ENCODE measurements at regions of chr15 and their contacts with region 1.

Region 1: DNA sequence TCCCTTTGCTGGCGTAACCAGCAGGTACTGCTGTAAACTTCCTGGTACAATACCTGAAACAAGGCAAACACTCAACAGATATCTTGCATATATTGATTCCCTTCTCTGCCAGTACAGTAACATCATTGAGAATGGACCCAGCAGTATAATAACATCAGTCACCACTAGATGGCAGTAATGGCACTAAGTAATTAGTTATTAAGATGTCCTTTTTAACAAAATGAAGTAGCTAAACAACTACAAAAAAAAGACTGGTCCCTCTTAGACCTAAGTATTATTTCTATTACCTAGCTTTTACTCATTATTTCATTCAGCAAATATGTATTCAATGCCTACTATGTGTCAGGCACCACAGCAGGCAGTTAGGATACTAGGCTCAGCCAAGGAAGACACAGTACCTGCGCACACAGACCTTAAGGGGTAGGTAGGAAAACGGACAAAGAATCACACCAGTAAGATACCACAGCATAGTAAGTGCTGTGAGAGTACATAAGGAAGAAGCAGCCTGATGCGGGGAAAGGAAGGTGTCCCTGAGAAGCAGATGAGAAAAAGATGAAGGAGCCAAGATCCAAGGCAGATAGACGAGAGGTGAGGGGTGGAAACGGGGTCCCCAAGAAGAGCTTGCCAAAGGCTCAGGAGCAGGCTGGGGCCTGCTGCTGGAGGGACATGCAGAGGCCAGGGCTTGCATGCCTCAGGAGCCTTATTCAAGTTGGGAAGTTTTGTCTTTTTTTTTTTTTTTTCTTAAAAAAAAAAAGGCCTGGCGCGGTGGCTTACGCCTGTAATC is 102.8 kb upstream of the CHD2 start:
- DNase-seq: no peak
- H3K4me3 ChIP-seq: no peak overlapping the region
- H3K27ac ChIP-seq: peak overlapping the region in 3 of 4 donors; percentile 28 to 52 (median 31)
- H3K4me1 ChIP-seq: peaks cover 4 to 25% (median 12%) of the 10 kb centered on the region in 4 donors
- H3K27me3 ChIP-seq: no peaks in the 10 kb centered on the region
- CTCF ChIP-seq: peak; percentile 75 to 85 (median 83)
- EP300 ChIP-seq: no peak
- POLR2A ChIP-seq: no peak

Region 2: GRCh38 chr15:91885714-91886270 is 911.6 kb before region 1 on chr15:
- in situ Hi-C with region 1: no loop called
- intact Hi-C with region 1: no loop called
- DNase-seq: no peak
- H3K4me3 ChIP-seq: no peak overlapping the region
- H3K27ac ChIP-seq: no peak overlapping the region
- H3K4me1 ChIP-seq: peaks cover 5 to 30% (median 21%) of the 10 kb centered on the region in 4 donors
- H3K27me3 ChIP-seq: no peaks in the 10 kb centered on the region
- CTCF ChIP-seq: peak in 2 of 5 experiments; percentile 20 to 23
- EP300 ChIP-seq: no peak
- POLR2A ChIP-seq: no peak

Region 3: DNA sequence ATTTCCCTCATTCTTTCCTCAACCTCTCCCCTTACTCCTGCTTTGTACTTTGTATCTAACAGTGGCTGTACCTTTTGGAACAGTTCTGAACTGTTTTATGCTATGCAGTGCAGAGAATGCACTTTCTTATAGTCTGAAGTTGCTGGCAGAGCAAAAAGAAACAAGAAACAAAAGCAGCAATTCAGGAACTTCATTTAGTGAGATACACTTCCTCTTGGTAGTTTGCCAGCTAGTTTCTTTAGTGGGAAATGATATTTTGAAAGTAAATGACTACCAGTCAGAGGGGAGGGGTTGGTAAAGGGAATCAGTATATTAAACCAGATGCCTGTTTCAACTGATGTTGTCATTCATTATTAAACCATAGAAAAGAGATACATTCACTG is 47.8 kb after region 1 on chr15:
- in situ Hi-C with region 1: no loop called
- intact Hi-C with region 1: no loop called
- DNase-seq: no peak
- H3K4me3 ChIP-seq: peak overlapping the region in 1 of 4 donors; percentile 20
- H3K27ac ChIP-seq: peak overlapping the region; percentile 73 to 92 (median 86)
- H3K4me1 ChIP-seq: peaks cover 0 to 34% (median 20%) of the 10 kb centered on the region in 4 donors
- H3K27me3 ChIP-seq: no peaks in the 10 kb centered on the region
- CTCF ChIP-seq: no peak
- EP300 ChIP-seq: no peak
- POLR2A ChIP-seq: peak; percentile 15

Region 4: DNA sequence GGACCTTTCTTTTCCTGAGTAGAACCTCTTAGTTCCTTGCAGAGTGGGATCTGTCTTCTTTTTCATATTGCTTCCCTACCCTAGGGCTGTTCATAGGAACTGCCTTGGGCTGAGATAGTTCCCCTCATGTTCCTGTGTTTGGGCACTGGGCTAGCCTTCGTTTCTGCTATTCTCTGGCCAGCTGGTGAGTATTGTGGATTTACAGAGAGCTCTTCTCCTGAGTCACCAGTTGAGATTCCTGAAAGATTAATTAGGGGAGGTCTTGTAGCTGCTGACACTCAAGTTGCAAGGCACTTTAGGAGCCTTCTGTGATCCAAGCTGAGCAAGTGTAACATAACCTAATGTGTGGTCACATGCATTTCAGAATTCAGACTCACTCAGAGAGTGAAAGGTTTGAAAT is 133.4 kb after region 1 on chr15:
- in situ Hi-C with region 1: loop called in 3 of 4 experiments (anchors 5 to 25 kb)
- intact Hi-C with region 1: no loop called
- DNase-seq: no peak
- H3K4me3 ChIP-seq: no peak overlapping the region
- H3K27ac ChIP-seq: peak overlapping the region in 3 of 4 donors; percentile 10 to 17 (median 16)
- H3K4me1 ChIP-seq: peaks cover 9 to 54% (median 38%) of the 10 kb centered on the region in 4 donors
- H3K27me3 ChIP-seq: no peaks in the 10 kb centered on the region
- CTCF ChIP-seq: no peak
- EP300 ChIP-seq: no peak
- POLR2A ChIP-seq: no peak

Region 5: GRCh38 chr15:92989470-92989869 is 192.1 kb after region 1 on chr15:
- in situ Hi-C with region 1: loop called in 1 of 4 experiments (anchors 10 kb)
- intact Hi-C with region 1: loop called (anchors 10 kb)
- DNase-seq: no peak
- H3K4me3 ChIP-seq: no peak overlapping the region
- H3K27ac ChIP-seq: no peak overlapping the region
- H3K4me1 ChIP-seq: no peaks in the 10 kb centered on the region
- H3K27me3 ChIP-seq: no peaks in the 10 kb centered on the region
- CTCF ChIP-seq: no peak
- EP300 ChIP-seq: no peak
- POLR2A ChIP-seq: no peak

Region 6: DNA sequence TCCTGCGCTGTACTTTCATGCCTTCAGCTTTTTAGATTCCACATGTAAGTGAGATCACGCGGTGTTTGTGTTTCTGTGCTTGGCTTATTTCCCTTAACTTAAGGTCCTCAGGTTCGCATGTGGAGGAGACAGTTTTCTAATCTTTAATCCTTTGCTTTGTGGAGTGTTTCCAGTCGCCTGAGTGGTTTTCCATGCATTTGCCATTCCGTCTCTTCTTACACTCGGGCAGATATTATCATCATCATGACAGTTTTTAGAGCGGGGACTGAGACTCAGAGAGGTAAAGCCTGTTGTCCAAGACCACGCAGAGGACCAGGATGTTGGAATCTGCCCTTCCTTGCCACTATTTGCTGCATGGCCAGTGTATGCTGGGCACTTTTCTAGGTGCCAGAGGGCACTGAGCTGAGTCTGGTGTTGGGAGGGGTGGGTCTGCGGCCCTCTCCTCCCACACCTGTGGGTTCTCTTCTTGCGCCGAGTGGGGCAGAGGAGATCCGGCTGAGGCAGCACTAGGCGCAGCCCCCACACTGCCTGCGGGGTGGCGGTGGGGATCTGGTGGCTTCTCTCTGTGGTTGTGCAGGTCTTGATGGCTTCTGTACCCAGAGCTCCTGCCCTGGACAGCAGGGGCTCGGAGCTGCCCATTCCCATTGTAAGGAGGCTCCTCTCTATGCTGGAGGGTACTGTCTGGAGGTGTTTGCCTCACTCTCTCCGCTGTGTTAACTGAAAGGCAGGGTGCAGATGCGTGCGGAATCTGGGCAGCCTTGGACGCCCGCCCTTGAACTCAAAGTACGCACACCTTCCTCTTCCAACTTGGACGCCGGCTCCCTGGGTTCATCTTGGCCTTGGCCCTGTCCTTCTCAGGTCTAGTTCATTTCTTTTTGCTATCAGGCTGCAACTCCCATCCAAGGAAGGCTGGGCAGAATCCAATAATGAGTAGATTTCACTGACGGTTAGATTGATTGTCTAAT is 447.6 kb after region 1 on chr15:
- in situ Hi-C with region 1: no loop called
- intact Hi-C with region 1: no loop called
- DNase-seq: no peak
- H3K4me3 ChIP-seq: no peak overlapping the region
- H3K27ac ChIP-seq: no peak overlapping the region
- H3K4me1 ChIP-seq: no peaks in the 10 kb centered on the region
- H3K27me3 ChIP-seq: no peaks in the 10 kb centered on the region
- CTCF ChIP-seq: no peak
- EP300 ChIP-seq: no peak
- POLR2A ChIP-seq: no peak

Measured in transverse colon (tissue), 4 donors.